ENCODE measurements at regions of chr15 and their contacts with region 1.

Region 1: GRCh38 chr15:66115568-66116206 is 137.9 kb downstream of the MEGF11 start:
- DNase-seq: peak; percentile 57
- H3K4me3 ChIP-seq: no peak overlapping the region
- H3K27ac ChIP-seq: no peak overlapping the region
- H3K4me1 ChIP-seq: peaks cover 33% of the 10 kb centered on the region
- CTCF ChIP-seq: peak; percentile 56; the same call in 1 of the 2 replicates

Region 2: DNA sequence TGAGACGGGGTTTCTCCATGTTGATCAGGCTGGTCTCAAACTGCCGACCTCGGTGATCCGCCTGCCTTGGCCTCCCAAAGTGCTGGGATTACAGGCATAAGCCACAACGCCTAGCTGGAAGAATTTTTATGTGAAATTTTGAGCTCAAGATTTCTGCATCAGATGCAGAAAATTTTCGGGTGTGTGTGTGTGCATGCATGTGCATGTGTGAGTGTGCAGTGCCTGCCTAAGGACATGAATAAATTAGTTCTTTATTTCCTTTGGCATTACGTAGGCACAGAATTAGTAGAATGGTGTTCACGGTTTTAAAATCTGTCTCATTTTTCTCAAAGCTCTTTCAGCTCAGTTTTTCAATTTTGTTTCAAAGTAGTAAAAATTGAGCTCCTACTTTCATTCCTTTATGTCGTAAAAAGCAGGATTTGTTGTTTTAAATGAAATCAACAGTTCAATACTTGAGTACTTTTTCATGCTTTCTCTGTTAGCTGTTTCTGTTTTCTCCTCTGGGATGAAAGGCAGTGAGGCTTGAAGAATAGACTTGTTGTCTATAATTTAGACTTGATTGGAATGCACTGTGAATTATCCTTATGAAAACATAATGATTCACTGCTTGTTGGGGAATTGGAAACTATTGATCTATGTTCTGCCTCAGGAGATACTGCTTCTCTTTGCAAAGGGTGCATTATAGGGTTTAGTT is 269.7 kb before region 1 on chr15:
- CTCF ChIA-PET with region 1: no interaction called
- POLR2A ChIA-PET with region 1: no interaction called
- intact Hi-C with region 1: no loop called
- DNase-seq: no peak
- H3K4me3 ChIP-seq: no peak overlapping the region
- H3K27ac ChIP-seq: no peak overlapping the region
- H3K4me1 ChIP-seq: no peaks in the 10 kb centered on the region
- CTCF ChIP-seq: no peak

Region 3: GRCh38 chr15:66161108-66161507 is 45.4 kb after region 1 on chr15:
- CTCF ChIA-PET with region 1: no interaction called
- POLR2A ChIA-PET with region 1: no interaction called
- intact Hi-C with region 1: no loop called
- DNase-seq: peak; percentile 58
- H3K4me3 ChIP-seq: no peak overlapping the region
- H3K27ac ChIP-seq: peak overlapping the region; percentile 57
- H3K4me1 ChIP-seq: peaks cover 82% of the 10 kb centered on the region
- CTCF ChIP-seq: no peak

Region 4: DNA sequence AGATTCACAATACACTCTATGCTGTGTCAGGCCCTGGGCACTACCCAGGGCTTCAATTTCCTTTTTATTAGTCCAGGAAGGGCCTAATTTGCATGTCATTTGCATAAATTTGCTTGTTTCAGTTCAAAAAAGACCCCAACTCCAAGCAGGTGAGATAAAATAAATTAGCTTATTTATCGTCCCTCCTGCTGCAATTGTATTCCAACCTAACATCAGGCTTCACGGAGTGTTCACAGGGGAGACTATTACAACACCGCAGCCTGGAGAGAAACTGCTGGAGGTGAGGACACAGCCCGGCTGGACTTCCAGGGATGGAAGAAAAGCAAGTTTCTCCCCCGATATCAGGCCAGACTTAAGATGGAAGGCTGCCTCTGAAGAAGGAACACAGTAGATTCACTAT is 75.1 kb after region 1 on chr15:
- CTCF ChIA-PET with region 1: no interaction called
- POLR2A ChIA-PET with region 1: interaction called, 5 read pairs
- intact Hi-C with region 1: loop called (anchors 1 kb)
- DNase-seq: no peak
- H3K4me3 ChIP-seq: no peak overlapping the region
- H3K27ac ChIP-seq: no peak overlapping the region
- H3K4me1 ChIP-seq: peaks cover 57% of the 10 kb centered on the region
- CTCF ChIP-seq: no peak

Region 5: GRCh38 chr15:66287461-66288057 is 171.9 kb after region 1 on chr15:
- CTCF ChIA-PET with region 1: interaction called, 4 read pairs
- POLR2A ChIA-PET with region 1: interaction called, 3 read pairs
- intact Hi-C with region 1: loop called (anchors 10 kb)
- DNase-seq: peak; percentile 61
- H3K4me3 ChIP-seq: no peak overlapping the region
- H3K27ac ChIP-seq: no peak overlapping the region
- H3K4me1 ChIP-seq: peaks cover 13% of the 10 kb centered on the region
- CTCF ChIP-seq: peak; percentile 88

Region 6: GRCh38 chr15:66524838-66525237 is 409.2 kb after region 1 on chr15:
- CTCF ChIA-PET with region 1: no interaction called
- POLR2A ChIA-PET with region 1: no interaction called
- intact Hi-C with region 1: no loop called
- DNase-seq: no peak
- H3K4me3 ChIP-seq: no peak overlapping the region
- H3K27ac ChIP-seq: no peak overlapping the region
- H3K4me1 ChIP-seq: no peaks in the 10 kb centered on the region
- CTCF ChIP-seq: no peak